ENCODE measurements at regions of chr2 and their contacts with region 1.

Region 1: DNA sequence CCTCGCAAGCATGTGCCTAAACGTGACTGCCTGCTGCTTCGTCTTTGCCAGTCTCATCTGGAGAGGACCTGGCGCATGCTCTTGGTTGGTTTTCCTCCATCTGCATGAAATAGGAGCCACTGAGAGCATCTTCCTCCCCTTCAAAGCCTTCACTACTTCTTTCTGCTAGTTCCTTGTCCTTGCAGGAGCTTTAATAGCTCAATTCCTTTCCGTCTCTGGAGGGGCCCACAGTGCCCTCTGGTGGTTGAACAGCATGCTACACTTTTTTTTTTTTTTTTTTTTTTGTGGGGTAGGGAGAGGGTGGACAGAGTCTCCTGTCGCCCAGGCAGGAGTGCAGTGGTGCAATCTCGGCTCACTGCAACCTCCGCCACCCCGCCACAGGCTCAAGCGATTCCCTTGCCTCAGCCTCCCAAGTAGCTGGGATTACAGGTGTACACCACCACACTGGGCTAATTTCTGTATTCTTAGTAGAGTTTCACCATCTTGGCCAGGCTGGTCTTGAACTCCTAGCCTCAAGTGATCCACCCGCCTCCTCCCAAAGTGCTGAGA is 59.6 kb downstream of the SP110 start:
- H3K4me3 Mint-ChIP-seq: no peak overlapping the region
- H3K27ac Mint-ChIP-seq: no peak overlapping the region
- H3K4me1 Mint-ChIP-seq: peaks cover 30% of the 10 kb centered on the region
- H3K27me3 Mint-ChIP-seq: peaks cover 2% of the 10 kb centered on the region

Region 2: DNA sequence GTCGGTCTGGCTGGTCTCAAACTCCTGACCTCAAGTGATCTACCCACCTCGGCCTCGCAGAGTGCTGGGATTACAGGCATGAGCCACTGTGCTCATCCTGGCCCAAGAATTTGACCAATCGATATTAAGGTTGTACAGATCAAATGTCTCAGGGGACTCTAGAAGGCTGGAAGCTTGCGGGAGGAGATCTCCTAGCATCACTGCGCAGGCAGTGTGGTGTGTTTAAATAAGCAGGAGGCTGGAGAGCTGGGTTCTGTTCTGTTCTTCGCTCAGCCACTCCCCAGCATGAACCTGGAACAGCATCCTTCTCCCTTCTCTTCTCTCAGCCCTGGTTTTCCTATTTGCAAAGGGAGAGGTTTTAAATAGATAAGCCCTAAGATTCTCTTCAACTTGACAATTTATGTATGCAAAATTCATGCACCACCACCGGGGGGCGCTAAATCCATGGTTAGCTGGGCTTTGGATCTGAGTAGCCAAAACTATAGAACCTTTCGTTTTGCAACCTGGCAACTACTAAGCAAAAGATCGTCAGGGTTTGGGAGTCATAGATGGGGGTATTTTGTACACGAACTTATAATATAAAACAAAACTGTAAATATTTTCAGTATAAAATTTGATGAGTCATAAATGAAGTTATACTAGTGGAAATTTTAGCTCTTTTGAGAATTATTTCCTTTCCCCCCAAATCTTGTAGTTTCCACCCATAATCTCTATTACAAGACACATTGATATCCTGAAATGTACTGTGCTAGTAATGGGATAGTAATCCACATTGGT is 152.1 kb before region 1 on chr2:
- intact Hi-C with region 1: loop called (anchors 1 kb)
- H3K4me3 Mint-ChIP-seq: no peak overlapping the region
- H3K27ac Mint-ChIP-seq: no peak overlapping the region
- H3K4me1 Mint-ChIP-seq: peaks cover 9% of the 10 kb centered on the region
- H3K27me3 Mint-ChIP-seq: no peaks in the 10 kb centered on the region

Region 3: GRCh38 chr2:230068016-230068650 is 92.1 kb before region 1 on chr2:
- intact Hi-C with region 1: loop called (anchors 1 kb)
- H3K4me3 Mint-ChIP-seq: peak overlapping the region; percentile 63
- H3K27ac Mint-ChIP-seq: peak overlapping the region; percentile 46
- H3K4me1 Mint-ChIP-seq: peaks cover 26% of the 10 kb centered on the region
- H3K27me3 Mint-ChIP-seq: peaks cover 40% of the 10 kb centered on the region

Region 4: DNA sequence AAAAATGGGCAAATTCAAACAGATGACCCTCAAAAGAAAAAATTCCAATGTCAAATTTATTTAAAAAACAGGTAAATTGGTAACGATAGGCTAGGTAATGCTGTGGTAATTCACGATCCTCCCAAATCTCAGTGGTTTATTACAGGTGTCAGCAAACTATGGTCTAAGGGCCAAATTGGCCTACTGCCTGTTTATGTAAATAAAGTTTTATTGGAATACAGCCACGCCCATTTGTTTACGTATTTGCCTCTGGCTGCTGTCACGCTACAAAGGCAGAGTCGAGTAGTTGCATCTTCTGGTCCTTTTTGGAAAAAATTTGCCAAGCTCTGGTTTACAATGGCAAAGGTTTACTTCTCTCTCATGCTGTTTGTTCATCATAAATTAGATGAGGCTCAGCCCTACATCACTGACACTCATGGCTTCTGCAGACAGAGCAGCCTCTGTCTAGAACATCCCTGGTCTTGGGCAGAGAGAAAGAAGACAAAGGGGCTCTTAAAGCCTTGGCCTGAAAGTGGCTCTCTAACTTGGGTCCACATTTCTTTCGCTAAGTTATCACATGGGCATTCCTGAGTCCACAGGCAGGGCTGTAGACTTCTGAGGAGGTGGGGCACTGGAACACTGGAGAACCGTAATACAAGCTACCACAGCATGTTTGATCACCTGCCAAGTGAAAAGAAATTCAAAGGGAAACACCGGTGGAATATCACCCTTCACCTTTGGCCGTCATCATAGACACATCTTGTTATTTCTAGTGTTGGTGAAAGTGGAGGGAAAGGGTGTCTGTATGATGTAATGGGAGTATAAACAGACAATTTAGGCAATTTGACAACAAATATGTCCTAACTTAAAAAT is 24.8 kb after region 1 on chr2:
- intact Hi-C with region 1: no loop called
- H3K4me3 Mint-ChIP-seq: no peak overlapping the region
- H3K27ac Mint-ChIP-seq: no peak overlapping the region
- H3K4me1 Mint-ChIP-seq: no peaks in the 10 kb centered on the region
- H3K27me3 Mint-ChIP-seq: no peaks in the 10 kb centered on the region

Region 5: DNA sequence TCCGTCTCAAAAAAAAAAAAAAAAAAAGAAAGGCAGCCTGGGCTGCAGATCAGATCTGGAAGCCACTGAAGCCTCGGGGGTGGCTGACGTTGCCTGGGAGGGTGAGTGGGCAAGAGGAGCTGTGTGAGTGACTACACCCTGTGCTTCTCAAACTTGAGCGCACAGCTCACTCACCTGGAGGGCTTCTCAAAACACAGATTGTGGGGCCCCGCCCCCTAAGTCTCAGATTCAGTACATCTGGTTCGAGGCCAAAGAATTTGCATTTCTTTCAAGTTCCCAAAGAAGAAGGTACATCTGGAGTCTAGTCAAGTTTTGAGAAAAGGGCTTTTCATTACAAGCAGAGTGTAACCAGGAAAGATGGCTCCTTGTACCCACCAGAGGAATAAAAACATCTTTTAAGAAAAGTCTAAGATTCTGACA is 454.7 kb after region 1 on chr2:
- intact Hi-C with region 1: loop called (anchors 2 kb)
- H3K4me3 Mint-ChIP-seq: no peak overlapping the region
- H3K27ac Mint-ChIP-seq: no peak overlapping the region
- H3K4me1 Mint-ChIP-seq: peaks cover 10% of the 10 kb centered on the region
- H3K27me3 Mint-ChIP-seq: peaks cover 2% of the 10 kb centered on the region